Endothelial cell of umbilical vein (primary cell): ENCODE measurements at regions of chr22 and their contacts with region 1.

Region 1: DNA sequence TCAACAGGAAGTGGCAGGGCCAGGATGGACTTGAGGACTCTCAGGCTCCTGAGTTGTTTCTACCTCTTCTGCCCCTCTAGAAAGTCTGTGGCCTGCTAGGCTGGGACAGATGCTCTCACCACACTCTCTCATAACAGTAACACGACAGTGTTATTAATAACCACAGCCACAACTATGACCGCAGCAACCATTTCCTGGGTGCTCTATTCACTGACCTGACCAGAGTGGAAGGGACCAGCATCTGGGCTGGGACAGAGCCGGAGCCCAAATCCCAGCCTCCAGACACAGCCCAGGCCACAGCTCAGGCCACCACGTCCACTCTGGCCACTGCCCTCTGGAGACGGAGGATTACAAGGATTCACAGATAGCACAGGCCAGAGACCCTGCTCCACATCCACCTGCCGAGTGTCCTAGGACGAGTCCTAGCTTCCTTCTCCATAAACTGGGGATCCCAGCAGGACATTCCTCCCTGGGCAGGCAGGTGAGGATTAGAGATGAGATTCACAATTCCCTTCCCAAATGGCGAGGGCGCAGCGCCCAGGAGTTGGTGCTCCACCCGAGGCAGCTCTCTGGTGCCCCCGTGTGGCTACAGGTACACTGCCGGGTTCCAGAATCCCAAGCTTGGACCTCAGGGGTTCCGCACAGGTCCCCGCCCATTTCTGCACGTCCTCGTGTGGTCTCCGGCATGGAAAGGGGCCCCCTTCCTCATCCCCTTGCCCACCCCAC is 7.0 kb downstream of the PNPLA5 start:
- DNase-seq: peak; percentile 25
- H3K4me3 ChIP-seq: no peak overlapping the region
- H3K27ac ChIP-seq: no peak overlapping the region
- H3K4me1 ChIP-seq: no peaks in the 10 kb centered on the region
- H3K27me3 ChIP-seq: no peaks in the 10 kb centered on the region
- CTCF ChIP-seq: peak; percentile 79 to 92
- POLR2A ChIP-seq: no peak

Region 2: GRCh38 chr22:43385770-43386641 is 498.8 kb before region 1 on chr22:
- CTCF ChIA-PET with region 1: interaction called, 7 read pairs
- POLR2A ChIA-PET with region 1: no interaction called
- dilution Hi-C with region 1: no loop called
- intact Hi-C with region 1: loop called (anchors 2 kb)
- DNase-seq: peak; percentile 70
- H3K4me3 ChIP-seq: no peak overlapping the region
- H3K27ac ChIP-seq: no peak overlapping the region
- H3K4me1 ChIP-seq: no peaks in the 10 kb centered on the region
- H3K27me3 ChIP-seq: peaks cover 4 to 10% of the 10 kb centered on the region in 2 experiments
- CTCF ChIP-seq: peak; percentile 91 to 95
- POLR2A ChIP-seq: no peak

Region 3: DNA sequence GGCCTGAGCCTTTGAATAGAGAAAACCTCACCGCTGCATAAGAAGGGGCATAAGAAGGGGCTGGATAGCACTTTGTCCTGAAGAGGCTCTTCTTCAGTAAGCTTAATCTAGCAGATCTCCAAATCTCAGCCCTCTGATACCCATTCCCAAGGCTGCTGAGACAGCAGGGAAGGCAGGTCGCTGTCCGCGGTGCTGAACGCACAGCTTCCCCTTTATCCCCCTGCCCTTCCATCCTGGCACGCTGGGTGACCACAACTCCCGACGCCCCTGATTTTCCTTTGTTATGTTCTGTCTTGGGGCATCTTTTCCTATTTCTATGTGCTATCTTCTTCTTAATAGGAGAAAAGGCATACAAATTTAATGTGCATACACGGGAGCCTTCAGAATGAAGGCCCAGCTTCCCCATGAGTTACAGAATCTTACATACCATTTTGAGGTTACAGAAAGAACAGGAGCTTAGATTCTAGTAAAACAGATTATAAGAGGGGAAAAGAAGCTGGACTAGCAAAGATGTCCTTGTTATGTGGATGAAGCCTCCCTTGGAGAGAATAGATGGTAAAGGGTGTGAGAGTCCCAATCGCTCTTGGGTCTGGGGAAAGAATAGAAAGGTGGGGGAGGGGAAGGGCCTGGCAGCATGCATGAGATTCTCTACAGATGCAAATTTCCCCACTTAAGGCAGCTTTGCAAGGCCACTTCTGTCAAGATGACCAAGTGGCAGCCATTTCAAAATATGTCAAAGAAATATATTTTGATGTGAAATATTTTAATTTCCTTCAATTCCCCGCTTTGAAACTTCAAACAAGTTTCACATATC is 16.7 kb before region 1 on chr22:
- CTCF ChIA-PET with region 1: interaction called, 19 read pairs
- POLR2A ChIA-PET with region 1: no interaction called
- dilution Hi-C with region 1: no loop called
- intact Hi-C with region 1: no loop called
- DNase-seq: peak; percentile 59
- H3K4me3 ChIP-seq: no peak overlapping the region
- H3K27ac ChIP-seq: no peak overlapping the region
- H3K4me1 ChIP-seq: no peaks in the 10 kb centered on the region
- H3K27me3 ChIP-seq: peaks cover 0 to 3% of the 10 kb centered on the region in 2 experiments
- CTCF ChIP-seq: no peak
- POLR2A ChIP-seq: no peak

Region 4: GRCh38 chr22:43897751-43898261 is 13.0 kb after region 1 on chr22:
- CTCF ChIA-PET with region 1: interaction called, 36 read pairs
- POLR2A ChIA-PET with region 1: no interaction called
- dilution Hi-C with region 1: no loop called
- intact Hi-C with region 1: no loop called
- DNase-seq: no peak
- H3K4me3 ChIP-seq: no peak overlapping the region
- H3K27ac ChIP-seq: no peak overlapping the region
- H3K4me1 ChIP-seq: no peaks in the 10 kb centered on the region
- H3K27me3 ChIP-seq: peaks cover 2 to 6% of the 10 kb centered on the region in 2 experiments
- CTCF ChIP-seq: no peak
- POLR2A ChIP-seq: no peak

Region 5: GRCh38 chr22:43923631-43924464 is 39.1 kb after region 1 on chr22 and contains the start of gene PNPLA3:
- CTCF ChIA-PET with region 1: interaction called, 13 read pairs
- POLR2A ChIA-PET with region 1: no interaction called
- dilution Hi-C with region 1: no loop called
- intact Hi-C with region 1: no loop called
- DNase-seq: peak; percentile 88
- H3K4me3 ChIP-seq: peak within 1 kb of the TSS; percentile 55 to 74 (median 63)
- H3K27ac ChIP-seq: peak within 1 kb of the TSS; percentile 27
- H3K4me1 ChIP-seq: peaks cover 30% of the 10 kb centered on the region
- H3K27me3 ChIP-seq: no peaks in the 10 kb centered on the region
- CTCF ChIP-seq: peak; percentile 29 to 36
- POLR2A ChIP-seq: peak; percentile 47
- total RNA-seq, gene PNPLA3: 12.1 and 12.3 TPM in 2 replicates

Region 6: DNA sequence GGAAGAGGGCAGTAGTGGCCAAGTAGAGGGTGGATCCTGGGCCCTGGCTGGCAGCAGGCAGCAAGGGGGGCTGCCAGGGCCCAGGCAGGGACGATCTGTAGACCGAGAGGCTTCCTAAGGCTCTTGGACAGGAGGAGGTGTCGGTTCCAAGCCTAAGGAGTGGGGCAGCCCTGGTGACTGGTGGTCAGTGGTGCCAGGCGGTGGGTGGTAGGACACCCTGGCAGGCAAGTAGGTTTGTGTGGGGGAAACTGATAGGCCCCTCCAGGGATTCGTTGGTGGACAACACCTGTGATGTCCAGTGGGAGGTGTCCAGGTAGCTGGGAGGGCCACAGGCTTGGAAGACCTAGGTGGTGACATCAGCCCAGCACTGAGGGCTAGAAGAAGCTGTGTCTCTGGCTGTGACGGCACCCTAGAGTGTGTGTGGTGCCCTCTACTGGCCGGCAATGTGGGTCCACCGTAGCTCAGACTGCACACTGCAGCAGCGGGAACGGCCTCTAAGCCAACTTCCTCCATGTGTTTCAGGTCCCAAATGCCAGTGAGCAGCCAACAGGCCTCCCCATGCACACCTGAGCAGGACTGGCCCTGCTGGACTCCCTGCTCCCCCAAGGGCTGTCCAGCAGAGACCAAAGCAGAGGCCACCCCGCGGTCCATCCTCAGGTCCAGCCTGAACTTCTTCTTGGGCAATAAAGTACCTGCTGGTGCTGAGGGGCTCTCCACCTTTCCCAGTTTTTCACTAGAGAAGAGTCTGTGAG is 61.0 kb after region 1 on chr22:
- CTCF ChIA-PET with region 1: interaction called, 92 read pairs
- POLR2A ChIA-PET with region 1: no interaction called
- dilution Hi-C with region 1: no loop called
- intact Hi-C with region 1: loop called (anchors 1 kb)
- DNase-seq: peak; percentile 63
- H3K4me3 ChIP-seq: no peak overlapping the region
- H3K27ac ChIP-seq: no peak overlapping the region
- H3K4me1 ChIP-seq: no peaks in the 10 kb centered on the region
- H3K27me3 ChIP-seq: no peaks in the 10 kb centered on the region
- CTCF ChIP-seq: peak; percentile 91 to 97
- POLR2A ChIP-seq: no peak

Region 7: DNA sequence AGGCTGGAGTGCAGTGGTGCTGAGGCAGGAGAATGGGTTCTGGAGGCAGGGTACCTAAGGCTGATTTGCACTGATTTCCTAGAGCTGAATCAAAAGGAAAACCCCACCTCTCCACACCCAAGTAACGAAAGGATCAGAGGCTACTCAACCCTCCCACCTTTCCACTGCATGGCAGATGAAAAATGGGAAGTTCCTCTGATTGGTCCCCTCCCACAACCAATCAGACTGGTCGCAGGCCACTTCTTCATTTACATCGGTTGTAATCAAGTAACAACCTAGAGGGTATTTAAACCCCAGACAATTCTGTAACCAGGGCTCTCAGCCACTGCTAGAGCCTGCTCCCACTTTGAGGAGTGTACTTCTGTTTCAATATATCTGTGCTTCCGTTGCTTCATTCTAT is 120.8 kb after region 1 on chr22:
- CTCF ChIA-PET with region 1: no interaction called
- POLR2A ChIA-PET with region 1: no interaction called
- dilution Hi-C with region 1: no loop called
- intact Hi-C with region 1: no loop called
- DNase-seq: no peak
- H3K4me3 ChIP-seq: no peak overlapping the region
- H3K27ac ChIP-seq: no peak overlapping the region
- H3K4me1 ChIP-seq: peaks cover 14% of the 10 kb centered on the region
- H3K27me3 ChIP-seq: no peaks in the 10 kb centered on the region
- CTCF ChIP-seq: no peak
- POLR2A ChIP-seq: no peak

Region 8: GRCh38 chr22:44202261-44202789 is 317.6 kb after region 1 on chr22:
- CTCF ChIA-PET with region 1: no interaction called
- POLR2A ChIA-PET with region 1: no interaction called
- dilution Hi-C with region 1: no loop called
- intact Hi-C with region 1: no loop called
- DNase-seq: no peak
- H3K4me3 ChIP-seq: no peak overlapping the region
- H3K27ac ChIP-seq: no peak overlapping the region
- H3K4me1 ChIP-seq: no peaks in the 10 kb centered on the region
- H3K27me3 ChIP-seq: no peaks in the 10 kb centered on the region
- CTCF ChIP-seq: no peak
- POLR2A ChIP-seq: no peak

Region 9: DNA sequence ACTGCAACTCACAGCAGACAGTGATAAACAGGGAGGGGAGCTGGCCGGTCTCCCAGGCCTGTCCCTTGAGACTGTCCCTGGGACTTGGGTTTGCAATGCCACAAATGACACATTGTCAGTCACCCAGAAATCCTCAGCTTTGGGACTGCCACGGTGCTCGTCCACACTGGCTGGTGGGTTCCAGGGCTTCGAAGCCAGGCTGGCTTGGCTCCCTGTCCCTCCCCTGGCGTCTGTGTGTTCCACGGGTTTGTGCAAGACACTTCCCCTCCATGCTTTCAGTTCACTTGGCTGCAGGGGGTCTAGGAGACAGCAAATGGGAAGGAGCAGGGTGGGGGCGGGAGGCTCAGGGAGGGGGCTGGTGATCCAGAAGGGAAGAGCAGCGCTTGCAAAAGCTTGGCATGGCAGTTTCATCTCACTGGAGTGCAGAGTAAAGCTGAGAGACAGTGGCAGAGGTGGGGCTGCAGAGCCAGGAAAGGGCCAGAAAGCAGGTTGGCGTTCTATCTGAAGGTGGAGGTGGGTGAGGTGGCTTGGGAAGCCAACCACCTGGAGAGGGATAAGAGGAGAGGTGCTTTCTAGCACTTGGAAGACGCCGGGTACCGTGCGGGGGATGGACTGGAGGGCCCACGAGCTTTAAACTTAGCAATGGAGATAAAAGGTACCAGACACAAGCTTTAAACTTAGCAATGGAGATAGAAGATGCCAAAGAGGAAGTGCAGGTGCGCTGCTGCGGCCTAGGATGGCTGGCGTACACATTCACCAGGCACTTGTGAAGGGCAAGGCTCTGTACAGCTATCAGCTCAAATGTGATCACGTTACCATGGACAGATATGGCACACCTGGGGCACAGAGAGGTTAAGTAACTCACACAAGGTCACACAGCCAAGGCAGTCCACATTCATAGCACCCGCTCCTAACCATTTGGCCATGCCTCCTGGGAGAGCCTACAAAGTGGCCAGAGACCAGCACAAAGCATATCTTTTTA is 514.4 kb after region 1 on chr22:
- CTCF ChIA-PET with region 1: no interaction called
- POLR2A ChIA-PET with region 1: no interaction called
- dilution Hi-C with region 1: no loop called
- intact Hi-C with region 1: no loop called
- DNase-seq: no peak
- H3K4me3 ChIP-seq: no peak overlapping the region
- H3K27ac ChIP-seq: no peak overlapping the region
- H3K4me1 ChIP-seq: no peaks in the 10 kb centered on the region
- H3K27me3 ChIP-seq: no peaks in the 10 kb centered on the region
- CTCF ChIP-seq: no peak
- POLR2A ChIP-seq: no peak

Region 10: GRCh38 chr22:44625981-44626687 is 741.4 kb after region 1 on chr22:
- CTCF ChIA-PET with region 1: interaction called, 14 read pairs
- POLR2A ChIA-PET with region 1: no interaction called
- dilution Hi-C with region 1: no loop called
- intact Hi-C with region 1: no loop called
- DNase-seq: peak; percentile 62
- H3K4me3 ChIP-seq: no peak overlapping the region
- H3K27ac ChIP-seq: no peak overlapping the region
- H3K4me1 ChIP-seq: no peaks in the 10 kb centered on the region
- H3K27me3 ChIP-seq: no peaks in the 10 kb centered on the region
- CTCF ChIP-seq: peak; percentile 85 to 88
- POLR2A ChIP-seq: no peak